Heart left ventricle (tissue), 16 donors: ENCODE measurements at regions of chr5 and their contacts with region 1.

Region 1: GRCh38 chr5:177454397-177455035 is 7.9 kb downstream of the PRR7 start:
- DNase-seq: peak; percentile 91 to 95 (median 92)
- ATAC-seq: peak; percentile 37 to 74 (median 70)
- H3K4me3 ChIP-seq: peak overlapping the region; percentile 48 to 81 (median 64)
- H3K27ac ChIP-seq: peak overlapping the region in 11 of 12 donors; percentile 60 to 83 (median 69)
- H3K4me1 ChIP-seq: peaks cover 0 to 57% (median 23%) of the 10 kb centered on the region in 12 donors
- H3K27me3 ChIP-seq: peaks cover 0 to 23% (median 3%) of the 10 kb centered on the region in 9 donors
- CTCF ChIP-seq: peak; percentile 85 to 96 (median 92)
- POLR2A ChIP-seq: peak in 1 of 2 donors; percentile 31

Region 2: DNA sequence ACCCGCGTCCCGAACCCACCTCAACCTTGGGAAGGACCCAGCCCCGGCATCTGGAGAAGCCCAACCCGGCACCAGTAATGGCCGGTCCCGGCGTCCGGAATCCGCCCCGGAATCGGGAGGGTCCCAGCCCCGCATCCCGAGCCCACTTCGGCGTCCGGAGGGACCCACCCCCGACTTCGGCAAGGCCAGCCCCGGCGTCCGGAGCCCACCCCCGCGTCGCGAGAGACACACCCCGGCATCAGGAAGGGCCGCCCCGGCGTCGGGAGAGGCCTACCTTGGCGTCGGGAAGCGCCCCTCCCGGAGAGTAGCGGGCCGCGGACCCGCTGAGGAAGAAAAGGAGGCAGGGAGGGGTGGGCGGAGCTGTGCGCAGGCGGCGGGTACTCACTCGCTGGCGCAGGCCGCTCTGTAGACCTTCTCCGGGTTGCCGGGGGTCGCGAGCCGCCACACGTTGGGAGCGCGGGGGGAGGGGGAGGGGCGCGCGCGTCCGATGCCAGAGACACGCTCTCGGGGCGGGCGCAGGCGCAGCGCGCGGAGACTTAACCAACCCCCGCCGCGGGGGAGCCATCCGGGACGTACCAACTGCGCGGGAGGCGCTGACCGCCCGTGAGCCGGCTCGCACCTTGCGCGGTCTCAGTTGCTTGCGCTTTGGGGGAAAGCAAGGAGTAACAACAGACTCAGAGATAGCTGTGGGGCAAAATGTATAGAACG is 448.1 kb before region 1 on chr5 and contains the start of gene UIMC1:
- intact Hi-C with region 1: no loop called
- DNase-seq: peak; percentile 92 to 96 (median 92)
- ATAC-seq: peak; percentile 83 to 93 (median 92)
- H3K4me3 ChIP-seq: peak within 1 kb of the TSS; percentile 60 to 98 (median 92)
- H3K27ac ChIP-seq: peak within 1 kb of the TSS; percentile 88 to 98 (median 97)
- H3K4me1 ChIP-seq: peaks cover 0 to 26% (median 18%) of the 10 kb centered on the region in 12 donors
- H3K27me3 ChIP-seq: no peaks in the 10 kb centered on the region
- CTCF ChIP-seq: no peak
- POLR2A ChIP-seq: peak in 1 of 2 donors; percentile 44
- total RNA-seq, gene UIMC1: 22.6 to 40.2 (median 36.8) TPM

Region 3: DNA sequence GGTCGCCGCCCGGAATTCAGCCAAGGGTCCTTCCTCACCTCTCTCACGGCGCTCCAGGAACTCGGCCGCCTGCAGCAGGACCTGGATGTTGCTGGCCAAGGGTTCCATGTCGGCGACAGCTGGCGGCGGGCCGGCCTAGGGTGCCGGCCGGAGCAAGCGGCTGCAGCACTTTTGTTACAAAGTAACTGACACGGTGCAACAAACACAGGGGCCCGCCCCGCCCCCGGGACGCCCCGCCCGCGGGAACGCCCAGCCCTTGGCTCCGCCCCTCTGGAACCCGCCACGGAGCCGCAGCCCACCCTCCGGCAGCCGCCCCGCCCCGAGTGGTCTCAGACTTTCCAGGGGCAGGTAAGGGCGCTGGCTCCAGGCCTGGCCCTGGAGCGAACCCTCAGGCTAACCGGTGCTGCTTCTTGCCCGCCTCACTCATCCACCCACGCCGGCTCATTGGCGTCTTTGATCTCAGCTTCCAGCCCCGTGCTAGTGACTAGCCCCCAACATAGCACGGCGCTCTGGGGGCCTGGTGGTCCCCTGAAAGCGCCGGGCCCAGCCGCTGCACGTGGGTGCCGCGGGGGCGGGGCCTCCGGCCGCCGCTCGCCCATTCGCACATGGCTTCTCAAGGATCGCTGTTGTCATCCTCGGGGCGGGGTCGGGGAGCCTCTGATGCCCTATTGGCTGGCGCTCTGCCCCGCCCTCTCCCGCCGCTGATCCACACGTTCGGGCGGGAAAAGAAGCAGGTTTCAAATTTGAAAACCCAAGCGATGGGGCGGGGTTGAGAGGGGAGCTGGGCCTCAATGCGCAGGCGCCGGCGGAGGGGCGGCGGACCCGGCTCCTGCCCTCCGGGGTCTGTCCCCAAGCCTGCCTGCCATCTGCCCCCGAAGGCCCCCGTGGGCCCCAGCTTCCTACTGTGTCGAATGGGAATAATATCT is 142.5 kb before region 1 on chr5 and contains the start of gene MXD3:
- intact Hi-C with region 1: loop called in 6 of 10 experiments (anchors 5 to 10 kb)
- DNase-seq: peak; percentile 96 to 99 (median 97)
- ATAC-seq: peak; percentile 81 to 92 (median 90)
- H3K4me3 ChIP-seq: peak within 1 kb of the TSS; percentile 6 to 65 (median 58)
- H3K27ac ChIP-seq: peak within 1 kb of the TSS in 1 of 12 donors; percentile 10
- H3K4me1 ChIP-seq: peaks cover 0 to 65% (median 25%) of the 10 kb centered on the region in 12 donors
- H3K27me3 ChIP-seq: no peaks in the 10 kb centered on the region
- CTCF ChIP-seq: no peak
- POLR2A ChIP-seq: no peak
- total RNA-seq, gene MXD3: 0.52 to 9.1 (median 3.1) TPM

Region 4: DNA sequence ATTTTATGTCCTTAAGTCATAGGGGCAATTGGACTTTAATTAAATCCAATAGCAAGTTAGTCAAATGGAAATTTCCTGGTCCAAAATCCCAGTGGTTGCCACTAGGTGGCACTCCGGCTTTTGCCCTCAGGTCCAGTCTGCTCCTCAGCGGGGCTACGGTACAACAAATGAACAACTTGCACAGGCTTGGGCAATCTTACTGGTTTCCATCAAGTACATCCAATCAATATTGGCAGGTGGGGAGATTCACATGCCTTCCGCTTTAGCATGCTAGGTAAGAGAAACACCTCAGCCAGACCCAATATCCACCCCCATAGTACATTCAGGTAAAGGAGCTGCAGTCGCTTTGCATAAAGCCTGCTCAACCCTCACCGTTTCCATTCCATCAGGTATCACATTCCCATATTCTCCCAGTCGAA is 136.5 kb before region 1 on chr5:
- intact Hi-C with region 1: loop called in 7 of 10 experiments (anchors 1 to 10 kb)
- DNase-seq: peak; percentile 65 to 77 (median 75)
- ATAC-seq: peak in 3 of 4 donors; percentile 47 to 55 (median 49)
- H3K4me3 ChIP-seq: no peak overlapping the region
- H3K27ac ChIP-seq: no peak overlapping the region
- H3K4me1 ChIP-seq: peaks cover 0 to 18% (median under 1%) of the 10 kb centered on the region in 12 donors
- H3K27me3 ChIP-seq: no peaks in the 10 kb centered on the region
- CTCF ChIP-seq: peak; percentile 67 to 90 (median 82)
- POLR2A ChIP-seq: no peak

Region 5: GRCh38 chr5:177390363-177391300 is 63.9 kb before region 1 on chr5:
- intact Hi-C with region 1: loop called in 8 of 10 experiments (anchors 1 to 2 kb)
- DNase-seq: peak; percentile 69 to 83 (median 79)
- ATAC-seq: peak; percentile 77 to 89 (median 82)
- H3K4me3 ChIP-seq: no peak overlapping the region
- H3K27ac ChIP-seq: peak overlapping the region in 1 of 12 donors; percentile 68
- H3K4me1 ChIP-seq: peaks cover 0 to 25% (median 0%) of the 10 kb centered on the region in 12 donors
- H3K27me3 ChIP-seq: peaks cover 0 to 25% (median 0%) of the 10 kb centered on the region in 9 donors
- CTCF ChIP-seq: peak; percentile 4 to 99 (median 98)
- POLR2A ChIP-seq: no peak

Region 6: DNA sequence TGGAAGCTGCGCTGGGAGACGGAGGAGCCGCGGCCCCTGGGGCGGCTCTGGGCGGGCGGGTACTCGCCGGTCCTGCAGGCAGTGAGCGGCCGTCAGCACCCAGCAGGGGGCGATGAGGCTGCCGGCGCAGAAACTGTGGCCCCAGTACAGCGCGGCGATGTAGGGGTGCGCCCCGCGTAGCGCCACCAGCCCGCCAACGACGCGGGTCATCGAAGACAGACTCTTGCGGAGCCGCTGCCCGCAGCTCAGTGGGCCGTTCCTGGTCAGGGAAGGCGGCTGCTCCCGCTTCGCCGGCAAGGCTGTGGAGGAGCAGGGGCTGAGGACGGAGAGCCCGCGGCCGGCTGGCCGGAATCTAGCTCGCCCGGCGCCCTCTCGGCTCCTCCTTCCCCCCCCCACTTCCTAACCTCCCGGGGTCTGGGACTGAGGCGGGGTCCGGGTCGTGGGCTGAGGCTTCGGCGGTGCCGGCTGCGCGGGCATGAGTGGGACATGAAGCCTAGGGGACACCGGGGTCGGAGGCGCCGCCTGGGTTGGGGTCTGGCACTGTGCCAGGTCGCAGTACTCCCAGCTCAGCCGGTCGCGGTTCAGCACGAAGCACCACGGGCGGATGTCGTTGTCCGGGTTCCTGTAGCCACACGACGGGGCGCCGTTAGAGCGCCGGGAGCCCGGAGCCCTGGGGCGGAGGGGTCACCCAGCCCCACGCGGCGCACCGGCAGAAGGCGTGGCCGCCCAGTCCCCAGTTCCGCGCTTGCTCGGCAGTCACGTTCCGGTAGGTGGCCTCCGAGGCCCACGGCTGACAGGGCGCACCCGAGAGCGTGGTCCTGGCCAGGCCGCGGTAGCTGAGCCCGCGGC is 50.5 kb before region 1 on chr5:
- intact Hi-C with region 1: loop called (anchors 1 to 5 kb)
- DNase-seq: peak; percentile 85 to 93 (median 87)
- ATAC-seq: peak; percentile 85 to 97 (median 94)
- H3K4me3 ChIP-seq: peak overlapping the region; percentile 32 to 64 (median 56)
- H3K27ac ChIP-seq: peak overlapping the region in 2 of 12 donors; percentile 25 to 35
- H3K4me1 ChIP-seq: peaks cover 8 to 51% (median 32%) of the 10 kb centered on the region in 12 donors
- H3K27me3 ChIP-seq: peaks cover 39 to 63% (median 50%) of the 10 kb centered on the region in 9 donors
- CTCF ChIP-seq: peak; percentile 63 to 85 (median 68)
- POLR2A ChIP-seq: no peak

Region 7: GRCh38 chr5:177425801-177426565 is 28.5 kb before region 1 on chr5:
- intact Hi-C with region 1: loop called in 2 of 10 experiments (anchors 1 to 2 kb)
- DNase-seq: peak; percentile 99 to 100 (median 100)
- ATAC-seq: peak; percentile 97 to 99 (median 98)
- H3K4me3 ChIP-seq: peak overlapping the region; percentile 42 to 95 (median 62)
- H3K27ac ChIP-seq: peak overlapping the region; percentile 77 to 98 (median 94)
- H3K4me1 ChIP-seq: peaks cover 0 to 50% (median 24%) of the 10 kb centered on the region in 12 donors
- H3K27me3 ChIP-seq: no peaks in the 10 kb centered on the region
- CTCF ChIP-seq: no peak
- POLR2A ChIP-seq: peak; percentile 52 to 86

Region 8: GRCh38 chr5:177509381-177509951 is 55.0 kb after region 1 on chr5 and contains the start of gene DOK3:
- intact Hi-C with region 1: no loop called
- DNase-seq: peak in 2 of 5 donors; percentile 69 to 80
- ATAC-seq: peak; percentile 29 to 66 (median 46)
- H3K4me3 ChIP-seq: peak within 1 kb of the TSS in 9 of 12 donors; percentile 11 to 71 (median 39)
- H3K27ac ChIP-seq: peak within 1 kb of the TSS in 7 of 12 donors; percentile 33 to 93 (median 48)
- H3K4me1 ChIP-seq: peaks cover 0 to 27% (median 0%) of the 10 kb centered on the region in 12 donors
- H3K27me3 ChIP-seq: no peaks in the 10 kb centered on the region
- CTCF ChIP-seq: no peak
- POLR2A ChIP-seq: no peak
- total RNA-seq, gene DOK3: 0.77 to 23.8 (median 2.7) TPM

Region 9: GRCh38 chr5:177520916-177521910 is 66.7 kb after region 1 on chr5:
- intact Hi-C with region 1: no loop called
- DNase-seq: peak in 1 of 5 donors; percentile 19
- ATAC-seq: no peak
- H3K4me3 ChIP-seq: no peak overlapping the region
- H3K27ac ChIP-seq: no peak overlapping the region
- H3K4me1 ChIP-seq: peaks cover 0 to 28% (median 5%) of the 10 kb centered on the region in 12 donors
- H3K27me3 ChIP-seq: no peaks in the 10 kb centered on the region
- CTCF ChIP-seq: no peak
- POLR2A ChIP-seq: no peak